A549 (cell line): ENCODE measurements at regions of chr6 and their contacts with region 1.

Region 1: DNA sequence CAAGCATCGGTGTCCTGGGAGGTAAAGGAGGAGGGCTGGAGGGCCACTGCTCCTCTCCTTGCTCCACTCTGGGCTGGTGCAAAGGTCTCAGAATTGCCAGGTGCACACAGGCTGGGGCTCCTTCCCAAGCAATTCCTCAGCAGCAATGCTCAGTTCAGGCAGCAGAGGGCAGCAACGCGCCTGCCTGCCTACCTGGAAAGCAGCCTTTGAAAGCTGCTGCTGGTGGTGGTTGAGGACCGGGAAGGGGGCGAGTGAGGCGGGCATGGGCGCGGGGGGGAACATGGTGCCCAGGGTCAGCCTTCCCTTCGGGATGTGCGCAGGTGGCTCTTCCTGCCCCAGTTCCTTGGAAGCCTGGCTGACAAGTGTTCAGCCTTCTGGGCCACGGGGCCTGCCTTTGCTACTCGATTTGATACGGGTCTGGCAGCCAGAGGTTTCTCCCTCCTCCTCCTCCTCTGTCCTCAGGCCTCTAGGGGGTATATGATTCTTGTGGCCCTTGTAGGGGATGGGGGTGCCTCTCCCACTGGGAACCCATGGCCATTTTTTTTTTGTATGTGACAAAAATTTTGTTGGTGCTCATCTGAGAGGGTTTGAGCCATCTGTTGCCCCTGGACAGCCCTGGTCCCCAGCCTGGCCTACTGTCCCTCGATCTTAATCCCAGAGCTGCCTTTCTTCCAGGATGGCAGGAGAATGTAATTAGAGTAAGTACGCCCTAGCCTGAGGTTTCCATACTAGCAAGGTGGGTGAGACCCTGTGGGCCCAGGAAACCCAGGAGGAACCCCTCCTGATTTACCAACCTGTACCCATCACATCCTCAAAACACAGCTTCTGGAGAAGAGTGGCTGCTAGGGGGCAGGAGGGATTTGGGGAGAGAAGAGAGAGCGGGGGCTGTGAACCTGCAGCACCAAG is 20.1 kb downstream of the MRPS18A start:
- DNase-seq: peak; percentile 54 to 68
- ATAC-seq: peak; percentile 71 to 81
- H3K4me3 ChIP-seq: no peak overlapping the region
- H3K27ac ChIP-seq: peak overlapping the region; percentile 28 to 66; a peak in 2 of 6 replicates
- H3K4me1 ChIP-seq: peaks cover 14% of the 10 kb centered on the region; the same call in 2 of the 3 replicates
- CTCF ChIP-seq: peak; percentile 77
- EP300 ChIP-seq: no peak
- POLR2A ChIP-seq: no peak
- RAD21 ChIP-seq: peak; percentile 87 to 88

Region 2: GRCh38 chr6:42996513-42996912 is 671.0 kb before region 1 on chr6:
- CTCF ChIA-PET with region 1: no interaction called
- POLR2A ChIA-PET with region 1: no interaction called
- DNase-seq: no peak
- ATAC-seq: peak in 1 of 2 experiments; percentile 34; a peak in 1 of 6 replicates
- H3K4me3 ChIP-seq: no peak overlapping the region
- H3K27ac ChIP-seq: no peak overlapping the region
- H3K4me1 ChIP-seq: peaks cover 7% of the 10 kb centered on the region; the same call in 2 of the 3 replicates
- CTCF ChIP-seq: no peak
- EP300 ChIP-seq: no peak
- POLR2A ChIP-seq: no peak
- RAD21 ChIP-seq: no peak

Region 3: DNA sequence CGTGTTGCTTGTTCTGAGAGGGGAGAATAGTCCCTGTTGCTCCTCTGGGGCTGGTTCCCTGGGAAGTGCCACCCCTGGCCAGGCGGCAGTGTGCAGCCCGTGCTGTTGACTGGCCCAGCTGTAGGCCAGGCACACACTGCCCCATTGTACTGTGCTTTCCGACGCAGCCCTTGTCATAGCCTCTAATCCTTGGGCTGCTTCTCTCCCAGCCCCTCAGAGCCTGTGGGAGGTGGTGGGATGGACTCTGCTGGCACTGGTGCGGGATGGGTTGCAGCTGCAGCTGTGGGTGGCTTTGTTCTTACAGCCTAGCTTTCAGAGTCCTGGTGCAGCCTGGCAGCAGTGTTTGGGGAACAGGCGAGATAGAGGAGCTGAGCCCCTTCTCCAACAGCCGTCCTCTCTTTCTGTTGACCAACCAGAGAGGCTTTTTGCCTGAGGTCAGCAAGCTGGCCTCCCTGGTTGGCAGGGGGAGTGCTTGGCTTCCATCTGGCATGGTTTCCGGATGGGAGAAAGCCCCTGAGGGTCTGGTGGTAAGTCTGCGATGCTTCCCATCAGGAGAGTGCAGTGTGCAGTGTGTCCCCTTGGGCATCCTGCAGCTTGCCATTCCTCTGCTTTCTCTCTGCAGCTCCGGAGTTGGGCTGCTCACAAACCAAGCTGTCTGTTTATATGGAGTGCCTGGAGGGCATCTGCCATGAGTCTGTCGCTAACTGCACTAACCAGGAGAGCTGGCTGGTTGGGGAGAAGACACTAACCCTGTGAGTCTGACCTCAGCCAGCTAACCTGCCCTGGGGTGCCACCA is 178.0 kb before region 1 on chr6:
- CTCF ChIA-PET with region 1: no interaction called
- POLR2A ChIA-PET with region 1: no interaction called
- DNase-seq: no peak
- ATAC-seq: no peak; a peak in 1 of 6 replicates
- H3K4me3 ChIP-seq: no peak overlapping the region
- H3K27ac ChIP-seq: no peak overlapping the region
- H3K4me1 ChIP-seq: no peaks in the 10 kb centered on the region
- CTCF ChIP-seq: no peak
- EP300 ChIP-seq: no peak
- POLR2A ChIP-seq: no peak
- RAD21 ChIP-seq: no peak

Region 4: GRCh38 chr6:43608310-43608763 is 59.2 kb before region 1 on chr6:
- CTCF ChIA-PET with region 1: interaction called, 13 read pairs
- POLR2A ChIA-PET with region 1: no interaction called
- DNase-seq: peak; percentile 50 to 69
- ATAC-seq: peak; percentile 85 to 86
- H3K4me3 ChIP-seq: no peak overlapping the region
- H3K27ac ChIP-seq: peak overlapping the region in 1 of 2 experiments; percentile 54; a peak in 1 of 6 replicates
- H3K4me1 ChIP-seq: no peaks in the 10 kb centered on the region; the same call in 2 of the 3 replicates
- CTCF ChIP-seq: peak; percentile 64
- EP300 ChIP-seq: no peak
- POLR2A ChIP-seq: no peak
- RAD21 ChIP-seq: peak; percentile 46; a peak in 4 of 5 replicates

Region 5: GRCh38 chr6:43644931-43645612 is 22.4 kb before region 1 on chr6 and contains the start of gene RSPH9:
- CTCF ChIA-PET with region 1: interaction called, 24 read pairs
- POLR2A ChIA-PET with region 1: no interaction called
- DNase-seq: peak in 1 of 2 experiments; percentile 66
- ATAC-seq: peak; percentile 89 to 91
- H3K4me3 ChIP-seq: peak within 1 kb of the TSS; percentile 43
- H3K27ac ChIP-seq: peak within 1 kb of the TSS; percentile 11 to 78; a peak in 4 of 6 replicates
- H3K4me1 ChIP-seq: no peaks in the 10 kb centered on the region
- CTCF ChIP-seq: no peak
- EP300 ChIP-seq: no peak
- POLR2A ChIP-seq: no peak
- RAD21 ChIP-seq: no peak
- polyA plus RNA-seq, gene RSPH9: 0.18 and 0.37 TPM in 2 replicates

Region 6: GRCh38 chr6:43680308-43681200 is 13.1 kb after region 1 on chr6:
- CTCF ChIA-PET with region 1: interaction called, 18 read pairs
- POLR2A ChIA-PET with region 1: interaction called, 4 read pairs
- DNase-seq: no peak
- ATAC-seq: no peak
- H3K4me3 ChIP-seq: no peak overlapping the region
- H3K27ac ChIP-seq: no peak overlapping the region
- H3K4me1 ChIP-seq: no peaks in the 10 kb centered on the region
- CTCF ChIP-seq: no peak
- EP300 ChIP-seq: no peak
- POLR2A ChIP-seq: no peak
- RAD21 ChIP-seq: no peak

Region 7: DNA sequence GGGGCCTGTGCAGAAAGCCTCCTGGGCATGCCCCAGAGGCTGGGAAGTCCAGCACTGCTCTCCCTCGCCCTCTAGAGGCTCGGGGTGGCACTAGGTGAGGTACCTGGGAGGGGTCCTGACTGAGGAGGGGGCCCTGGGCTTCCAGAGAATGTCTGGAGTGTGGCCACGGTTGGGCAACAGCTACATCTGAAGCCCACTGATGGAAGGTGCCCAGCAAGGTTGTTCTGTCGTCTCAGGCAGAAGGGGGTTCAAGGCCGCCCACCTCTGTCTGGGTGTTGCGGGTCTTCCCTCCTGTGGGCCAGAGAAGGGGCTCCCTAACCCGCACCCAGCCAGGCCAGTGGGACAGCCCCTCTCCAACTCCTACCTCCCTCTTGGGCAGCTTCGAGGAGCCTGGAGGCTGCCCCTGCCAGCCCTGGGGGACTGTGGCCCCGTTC is 91.1 kb after region 1 on chr6:
- CTCF ChIA-PET with region 1: interaction called, 19 read pairs
- POLR2A ChIA-PET with region 1: no interaction called
- DNase-seq: peak in 1 of 2 experiments; percentile 27
- ATAC-seq: peak; percentile 57 to 85; a peak in 4 of 6 replicates
- H3K4me3 ChIP-seq: no peak overlapping the region
- H3K27ac ChIP-seq: 0 out of 6 replicates have a peak overlapping the region, but pooled peaks of 1 of the 2 experiments have one; percentile 27
- H3K4me1 ChIP-seq: no peaks in the 10 kb centered on the region
- CTCF ChIP-seq: peak; percentile 52
- EP300 ChIP-seq: no peak
- POLR2A ChIP-seq: no peak
- RAD21 ChIP-seq: peak; percentile 53 to 60